ENCODE measurements at regions of chr12 and their contacts with region 1.

Region 1: DNA sequence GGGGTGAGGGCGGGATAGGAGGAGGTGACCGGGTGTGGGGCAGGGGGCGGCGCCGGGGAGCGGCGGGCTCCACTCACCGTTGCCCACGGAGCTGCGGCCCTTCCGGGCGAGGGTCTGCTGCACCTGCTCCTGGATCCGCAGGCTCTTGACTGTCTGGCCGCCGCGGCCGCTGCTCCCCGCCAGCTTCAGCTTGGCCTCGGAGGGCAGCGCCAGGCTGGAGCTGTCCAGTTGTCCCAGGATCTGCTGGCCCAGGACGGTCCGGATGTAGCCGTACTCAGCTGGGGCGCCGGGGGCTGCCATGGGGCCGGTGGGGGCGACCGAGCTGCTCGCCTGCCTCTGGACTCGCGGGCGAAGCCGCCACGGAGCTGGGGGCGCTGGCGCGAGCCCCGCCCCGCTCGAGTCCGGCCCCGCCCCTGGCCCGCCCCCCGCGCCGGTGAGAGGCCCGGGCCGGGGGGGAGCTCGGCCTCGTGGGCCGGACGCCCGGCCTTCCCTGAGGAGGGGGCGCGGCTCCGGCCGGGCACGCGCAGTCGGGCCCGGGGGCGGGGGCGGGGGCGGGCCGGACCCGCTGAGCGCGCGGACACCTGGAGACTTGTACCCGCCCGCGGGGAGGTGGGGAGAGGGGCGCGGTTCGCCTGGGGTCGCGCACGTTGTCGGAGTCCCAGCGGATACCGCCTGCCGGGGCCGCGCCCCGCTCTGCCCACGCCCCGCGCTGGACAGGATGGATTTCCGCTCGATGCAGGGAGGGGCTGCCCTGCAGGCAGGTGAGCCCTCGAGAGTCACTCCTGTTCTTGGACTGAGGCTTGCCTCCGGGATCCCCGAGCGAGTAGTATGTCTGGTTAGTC is at the start of gene PKP2:
- DNase-seq: peak; percentile 100
- H3K4me3 ChIP-seq: peak within 1 kb of the TSS; percentile 95
- H3K4me3 Mint-ChIP-seq: peak within 1 kb of the TSS; percentile 91
- H3K27ac Mint-ChIP-seq: peak within 1 kb of the TSS; percentile 87
- H3K4me1 ChIP-seq: peaks cover 52% of the 10 kb centered on the region
- H3K4me1 Mint-ChIP-seq: peaks cover 50% of the 10 kb centered on the region
- H3K27me3 ChIP-seq: no peaks in the 10 kb centered on the region
- H3K27me3 Mint-ChIP-seq: no peaks in the 10 kb centered on the region
- CTCF ChIP-seq: no peak
- total RNA-seq, gene PKP2: 249 and 275 TPM in 2 replicates

Region 2: GRCh38 chr12:32444895-32445294 is 451.8 kb before region 1 on chr12:
- CTCF ChIA-PET with region 1: no interaction called
- POLR2A ChIA-PET with region 1: no interaction called
- intact Hi-C with region 1: loop called (anchors 5 kb)
- DNase-seq: peak; percentile 66 to 68
- H3K4me3 ChIP-seq: no peak overlapping the region
- H3K4me3 Mint-ChIP-seq: peak overlapping the region; percentile 57
- H3K27ac Mint-ChIP-seq: peak overlapping the region; percentile 94
- H3K4me1 ChIP-seq: peaks cover 59% of the 10 kb centered on the region
- H3K4me1 Mint-ChIP-seq: peaks cover 68% of the 10 kb centered on the region
- H3K27me3 ChIP-seq: no peaks in the 10 kb centered on the region
- H3K27me3 Mint-ChIP-seq: no peaks in the 10 kb centered on the region
- CTCF ChIP-seq: no peak

Region 3: DNA sequence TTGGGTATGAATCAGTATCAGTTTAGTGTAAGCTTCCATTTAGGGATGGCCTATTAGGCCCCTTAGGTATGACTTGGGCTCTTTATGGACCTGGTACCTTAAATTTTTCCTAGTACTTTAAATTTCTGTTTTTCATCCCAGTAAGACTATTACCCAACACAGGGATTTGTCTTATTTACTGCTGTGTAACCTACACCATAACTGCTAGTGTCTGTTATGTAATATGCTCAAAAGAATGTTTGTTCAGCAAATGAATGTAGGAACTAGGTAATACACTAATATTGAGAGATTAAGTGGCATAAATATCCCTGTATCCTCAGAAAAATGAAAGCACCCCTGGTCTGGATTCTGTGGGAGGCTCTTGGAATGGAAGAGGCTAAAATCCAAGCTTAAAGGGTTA is 77.2 kb before region 1 on chr12:
- CTCF ChIA-PET with region 1: no interaction called
- POLR2A ChIA-PET with region 1: interaction called, 3 read pairs
- intact Hi-C with region 1: loop called (anchors 2 kb)
- DNase-seq: no peak
- H3K4me3 ChIP-seq: no peak overlapping the region
- H3K4me3 Mint-ChIP-seq: no peak overlapping the region
- H3K27ac Mint-ChIP-seq: no peak overlapping the region
- H3K4me1 ChIP-seq: peaks cover 9% of the 10 kb centered on the region
- H3K4me1 Mint-ChIP-seq: peaks cover 31% of the 10 kb centered on the region
- H3K27me3 ChIP-seq: no peaks in the 10 kb centered on the region
- H3K27me3 Mint-ChIP-seq: no peaks in the 10 kb centered on the region
- CTCF ChIP-seq: no peak

Region 4: GRCh38 chr12:32918890-32919801 is 22.5 kb after region 1 on chr12:
- CTCF ChIA-PET with region 1: interaction called, 3 read pairs
- POLR2A ChIA-PET with region 1: interaction called, 10 read pairs
- intact Hi-C with region 1: loop called (anchors 1 kb)
- DNase-seq: peak in 1 of 2 experiments; percentile 62
- H3K4me3 ChIP-seq: no peak overlapping the region
- H3K4me3 Mint-ChIP-seq: no peak overlapping the region
- H3K27ac Mint-ChIP-seq: no peak overlapping the region
- H3K4me1 ChIP-seq: no peaks in the 10 kb centered on the region
- H3K4me1 Mint-ChIP-seq: no peaks in the 10 kb centered on the region
- H3K27me3 ChIP-seq: no peaks in the 10 kb centered on the region
- H3K27me3 Mint-ChIP-seq: no peaks in the 10 kb centered on the region
- CTCF ChIP-seq: peak; percentile 87 to 90

Measured in Caco-2 (cell line).